ENCODE measurements at regions of chr11 and their contacts with region 1.

Region 1: DNA sequence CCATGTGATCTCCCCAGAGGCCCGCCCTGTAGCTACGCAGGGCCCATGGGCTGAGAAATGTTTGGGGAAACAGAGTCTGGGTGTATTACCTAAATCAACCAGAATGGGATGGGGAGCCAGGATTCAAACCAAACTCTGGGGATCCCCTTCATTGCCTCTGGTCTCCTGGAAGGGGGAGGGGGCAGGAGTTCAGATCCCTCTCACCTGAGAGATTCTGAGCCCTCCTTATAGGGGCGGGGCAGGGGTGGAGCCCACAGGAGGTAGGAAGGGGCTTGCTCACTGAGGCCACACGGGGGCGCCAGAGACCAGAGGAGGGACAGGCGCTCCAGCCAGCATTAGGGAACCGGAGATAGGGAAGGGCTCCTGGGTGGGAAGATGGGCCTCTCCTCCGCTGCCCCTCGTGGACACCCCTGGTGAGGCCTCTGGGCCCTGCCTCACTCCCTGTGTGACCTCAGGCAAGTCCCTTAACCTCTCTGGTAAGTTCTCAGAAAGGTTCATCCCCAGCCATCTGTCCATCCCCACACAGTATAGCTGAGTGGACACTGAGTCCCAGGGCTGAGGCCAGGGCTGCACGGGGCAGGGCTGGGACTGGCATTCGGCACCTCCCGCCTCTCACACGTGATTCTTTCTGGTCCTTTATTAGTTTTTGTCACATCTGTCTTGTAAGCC is 2.7 kb upstream of the CDC42BPG start:
- DNase-seq: no peak
- H3K4me3 ChIP-seq: no peak overlapping the region
- CTCF ChIP-seq: peak; percentile 93

Region 2: GRCh38 chr11:64810271-64810890 is 36.8 kb before region 1 on chr11 and contains the start of gene MEN1:
- CTCF ChIA-PET with region 1: interaction called, 14 read pairs
- POLR2A ChIA-PET with region 1: no interaction called
- DNase-seq: peak; percentile 58
- H3K4me3 ChIP-seq: peak within 1 kb of the TSS; percentile 83
- CTCF ChIP-seq: no peak

Region 3: GRCh38 chr11:64864473-64865285 is 17.5 kb after region 1 on chr11:
- CTCF ChIA-PET with region 1: interaction called, 81 read pairs
- POLR2A ChIA-PET with region 1: interaction called, 6 read pairs
- DNase-seq: peak; percentile 75
- H3K4me3 ChIP-seq: 0 out of 2 replicates have a peak overlapping the region, but pooled peaks have one; percentile 3
- CTCF ChIP-seq: no peak

Region 4: GRCh38 chr11:64905516-64906313 is 58.6 kb after region 1 on chr11:
- CTCF ChIA-PET with region 1: interaction called, 13 read pairs
- POLR2A ChIA-PET with region 1: no interaction called
- DNase-seq: no peak
- H3K4me3 ChIP-seq: no peak overlapping the region
- CTCF ChIP-seq: no peak

Region 5: GRCh38 chr11:65117216-65118096 is 270.3 kb after region 1 on chr11 and contains the start of gene ZNHIT2:
- CTCF ChIA-PET with region 1: interaction called, 19 read pairs
- POLR2A ChIA-PET with region 1: interaction called, 3 read pairs
- DNase-seq: peak; percentile 84
- H3K4me3 ChIP-seq: peak within 1 kb of the TSS; percentile 94
- CTCF ChIP-seq: peak; percentile 87

Measured in AG04449 (cell line).